Calu3 (cell line): ENCODE measurements at regions of chr3 and their contacts with region 1.

Region 1: DNA sequence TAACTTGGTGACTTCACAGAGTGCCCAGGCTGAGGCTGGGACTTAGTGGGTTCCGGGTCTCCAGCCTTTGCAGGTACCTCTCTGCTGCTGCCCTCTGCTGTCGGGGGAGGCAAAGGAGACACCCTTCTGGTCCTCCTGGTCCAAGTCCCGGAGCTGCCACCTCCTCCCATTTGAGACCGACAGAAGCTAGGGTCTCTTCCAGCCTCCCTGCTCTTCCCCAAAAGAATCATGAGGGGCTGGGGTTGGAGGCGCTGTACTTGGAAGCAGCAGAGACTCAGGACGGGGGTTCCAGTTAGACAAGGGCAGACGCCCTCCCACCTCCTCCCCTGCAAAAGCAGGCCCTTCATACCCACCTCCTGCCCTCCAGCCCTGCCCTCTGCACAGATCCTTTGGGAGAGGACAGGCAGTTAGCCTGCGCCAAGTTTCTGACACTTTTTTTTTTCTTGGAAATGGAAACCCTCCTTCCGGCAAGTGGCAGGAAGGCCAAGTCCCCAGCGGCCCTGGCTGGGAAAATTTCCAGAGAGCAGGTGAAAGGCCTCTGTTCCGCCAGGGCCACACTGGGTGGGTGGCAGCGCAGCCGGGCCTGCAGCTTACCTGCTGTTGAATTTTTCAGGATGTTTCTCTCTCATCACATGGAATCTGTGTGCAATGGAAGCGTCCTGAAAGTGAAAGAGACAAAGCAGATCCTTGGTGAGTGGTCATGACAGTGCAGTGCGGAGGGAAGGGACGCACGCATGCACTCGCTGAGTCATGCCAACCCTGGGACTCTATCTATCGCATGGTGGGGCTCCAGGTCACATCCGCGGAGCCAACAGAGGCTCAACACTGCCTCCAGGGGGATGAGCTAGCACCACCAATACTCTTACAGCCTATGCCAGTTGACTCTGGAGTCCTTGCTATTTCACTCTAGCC is 119.9 kb downstream of the DGKG start:
- DNase-seq: peak; percentile 94
- H3K4me3 Mint-ChIP-seq: peak overlapping the region; percentile 70
- H3K27ac Mint-ChIP-seq: peak overlapping the region; percentile 57
- H3K4me1 Mint-ChIP-seq: peaks cover 14% of the 10 kb centered on the region
- H3K27me3 Mint-ChIP-seq: peaks cover 15% of the 10 kb centered on the region
- CTCF ChIP-seq: peak; percentile 87

Region 2: DNA sequence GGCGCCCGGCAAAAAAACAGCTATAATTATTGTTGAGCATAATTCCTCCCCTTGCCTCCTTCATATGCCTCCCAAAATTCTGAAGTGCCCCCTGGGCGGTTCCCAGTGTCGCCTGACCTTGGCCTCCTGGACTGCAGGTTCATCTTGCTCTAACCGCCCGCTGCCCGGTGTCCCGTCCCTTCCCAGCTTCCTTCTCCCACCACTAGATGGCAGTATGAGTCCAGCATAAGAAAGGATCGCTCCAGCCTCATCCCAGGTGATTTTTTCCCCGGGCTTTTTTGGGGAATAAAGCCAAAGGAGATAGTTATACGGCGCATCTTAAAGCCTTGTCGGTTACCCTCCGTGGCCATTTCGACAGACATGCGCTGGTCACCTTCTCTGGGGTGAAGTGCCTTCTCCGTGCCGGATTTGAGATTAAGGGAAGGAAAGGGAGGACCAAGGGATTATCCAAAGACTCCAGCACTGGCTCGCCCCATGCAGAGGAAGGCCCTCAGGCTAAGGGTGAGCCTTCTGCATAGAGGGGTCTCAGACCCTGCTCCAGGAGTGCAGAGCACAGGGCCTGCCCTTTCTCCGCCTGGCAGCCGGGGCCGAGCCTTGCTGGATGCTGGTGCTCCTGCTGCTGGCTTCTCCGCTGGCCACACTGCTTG is 258.5 kb before region 1 on chr3:
- CTCF ChIA-PET with region 1: interaction called, 26 read pairs
- intact Hi-C with region 1: loop called (anchors 1 kb)
- DNase-seq: peak; percentile 87
- H3K4me3 Mint-ChIP-seq: no peak overlapping the region
- H3K27ac Mint-ChIP-seq: no peak overlapping the region
- H3K4me1 Mint-ChIP-seq: peaks cover 17% of the 10 kb centered on the region
- H3K27me3 Mint-ChIP-seq: peaks cover 16% of the 10 kb centered on the region
- CTCF ChIP-seq: peak; percentile 98

Region 3: DNA sequence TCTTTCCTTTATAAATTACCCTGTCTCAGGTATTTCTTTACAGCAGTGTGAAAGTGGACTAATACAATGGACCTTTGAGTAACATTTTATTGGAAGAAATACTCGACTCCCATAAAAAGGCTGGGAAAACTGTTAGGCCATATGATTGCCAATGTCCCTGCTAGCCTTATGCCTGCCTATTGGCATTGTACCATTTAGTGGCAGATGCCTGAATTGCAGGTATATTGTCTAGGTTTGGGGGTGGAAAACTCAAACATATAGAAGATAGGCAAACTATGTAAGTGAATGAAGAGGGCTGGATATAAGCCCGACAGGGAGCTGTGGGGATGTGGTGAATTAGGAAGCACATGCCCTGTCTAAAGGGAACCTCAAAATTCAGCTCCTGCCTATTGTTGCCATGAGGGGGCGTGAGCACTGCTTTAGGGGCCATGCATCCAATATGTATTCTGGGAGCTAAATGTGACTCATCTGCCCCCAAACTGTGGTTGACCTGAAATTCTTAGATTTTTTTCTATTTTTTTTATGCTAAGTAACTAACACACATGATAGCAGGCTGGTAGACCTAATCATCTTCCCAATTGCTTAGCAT is 239.2 kb before region 1 on chr3:
- CTCF ChIA-PET with region 1: interaction called, 23 read pairs
- intact Hi-C with region 1: loop called (anchors 1 kb)
- DNase-seq: peak; percentile 30
- H3K4me3 Mint-ChIP-seq: no peak overlapping the region
- H3K27ac Mint-ChIP-seq: no peak overlapping the region
- H3K4me1 Mint-ChIP-seq: no peaks in the 10 kb centered on the region
- H3K27me3 Mint-ChIP-seq: peaks cover 10% of the 10 kb centered on the region
- CTCF ChIP-seq: peak; percentile 62

Region 4: GRCh38 chr3:186097663-186098451 is 144.3 kb before region 1 on chr3:
- CTCF ChIA-PET with region 1: interaction called, 36 read pairs
- intact Hi-C with region 1: loop called (anchors 1 kb)
- DNase-seq: peak; percentile 96
- H3K4me3 Mint-ChIP-seq: peak overlapping the region; percentile 75
- H3K27ac Mint-ChIP-seq: peak overlapping the region; percentile 81
- H3K4me1 Mint-ChIP-seq: peaks cover 71% of the 10 kb centered on the region
- H3K27me3 Mint-ChIP-seq: no peaks in the 10 kb centered on the region
- CTCF ChIP-seq: no peak

Region 5: GRCh38 chr3:186108941-186109865 is 133.0 kb before region 1 on chr3 and contains the start of gene ETV5:
- CTCF ChIA-PET with region 1: interaction called, 15 read pairs
- intact Hi-C with region 1: no loop called
- DNase-seq: peak; percentile 100
- H3K4me3 Mint-ChIP-seq: peak within 1 kb of the TSS; percentile 79
- H3K27ac Mint-ChIP-seq: peak within 1 kb of the TSS; percentile 85
- H3K4me1 Mint-ChIP-seq: peaks cover 25% of the 10 kb centered on the region
- H3K27me3 Mint-ChIP-seq: peaks cover 16% of the 10 kb centered on the region
- CTCF ChIP-seq: no peak
- total RNA-seq, gene ETV5: 95.9 and 108 TPM in 2 replicates

Region 6: GRCh38 chr3:186277268-186277909 is 35.2 kb after region 1 on chr3:
- CTCF ChIA-PET with region 1: interaction called, 10 read pairs
- intact Hi-C with region 1: no loop called
- DNase-seq: peak; percentile 41
- H3K4me3 Mint-ChIP-seq: no peak overlapping the region
- H3K27ac Mint-ChIP-seq: no peak overlapping the region
- H3K4me1 Mint-ChIP-seq: no peaks in the 10 kb centered on the region
- H3K27me3 Mint-ChIP-seq: peaks cover 62% of the 10 kb centered on the region
- CTCF ChIP-seq: no peak

Region 7: DNA sequence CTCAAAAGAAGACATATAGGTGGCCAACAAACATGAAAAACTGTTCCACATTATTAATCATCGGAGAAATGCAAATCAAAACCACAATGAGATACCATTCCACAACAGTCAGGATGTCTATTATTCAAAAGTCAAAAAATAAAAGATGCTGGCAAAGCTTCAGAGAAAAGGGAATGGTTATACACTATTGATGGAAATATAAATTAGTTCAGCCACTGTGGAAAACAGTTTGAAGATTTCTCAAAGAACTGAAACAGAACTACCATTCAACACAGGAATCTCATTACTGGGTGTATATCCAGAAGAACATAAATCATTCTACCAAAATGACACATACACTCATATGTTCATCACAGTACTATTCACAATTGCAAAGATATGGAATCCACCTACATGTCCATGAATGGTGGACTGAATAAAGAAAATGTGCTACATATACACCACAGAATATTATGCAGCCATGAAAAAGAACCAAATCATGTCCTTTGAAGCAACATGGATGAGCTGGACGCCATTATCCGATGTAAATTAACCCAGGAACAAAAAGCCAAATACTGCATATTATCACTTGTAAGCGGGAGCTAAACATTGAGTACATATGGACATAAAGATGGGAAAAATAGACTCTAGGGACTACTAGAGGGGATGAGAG is 152.5 kb after region 1 on chr3:
- CTCF ChIA-PET with region 1: no interaction called
- intact Hi-C with region 1: no loop called
- DNase-seq: no peak
- H3K4me3 Mint-ChIP-seq: no peak overlapping the region
- H3K27ac Mint-ChIP-seq: no peak overlapping the region
- H3K4me1 Mint-ChIP-seq: no peaks in the 10 kb centered on the region
- H3K27me3 Mint-ChIP-seq: peaks cover 96% of the 10 kb centered on the region
- CTCF ChIP-seq: no peak

Region 8: DNA sequence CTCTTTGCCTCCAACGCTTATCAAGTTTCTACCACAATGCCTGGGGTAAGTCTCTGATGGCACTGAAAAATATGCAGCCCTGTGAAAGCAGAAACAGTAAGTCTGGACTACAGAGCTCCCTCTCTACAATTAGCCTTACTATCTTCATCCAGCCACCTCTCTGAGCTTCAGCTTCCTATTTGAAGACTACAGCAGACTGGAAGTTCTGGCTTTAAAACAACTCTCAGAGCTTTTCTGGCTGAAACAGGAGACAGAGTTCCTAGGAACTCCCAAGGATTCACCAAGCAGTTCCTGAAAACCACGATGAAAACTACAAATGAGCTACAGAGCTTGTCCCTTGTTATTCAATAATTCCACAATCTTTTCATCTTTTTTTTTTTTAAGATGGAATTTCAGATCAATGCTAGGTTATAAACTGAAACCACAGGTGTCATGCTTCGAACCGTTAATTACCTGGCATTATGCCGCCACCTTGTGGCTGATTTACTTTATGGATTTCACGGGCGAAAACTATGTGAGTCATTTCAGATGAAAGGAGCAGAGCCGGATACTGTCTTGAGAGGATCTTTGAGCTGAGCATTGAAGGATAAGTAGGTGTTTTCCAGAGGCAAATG is 298.2 kb after region 1 on chr3:
- CTCF ChIA-PET with region 1: interaction called, 16 read pairs
- intact Hi-C with region 1: no loop called
- DNase-seq: peak; percentile 89
- H3K4me3 Mint-ChIP-seq: no peak overlapping the region
- H3K27ac Mint-ChIP-seq: no peak overlapping the region
- H3K4me1 Mint-ChIP-seq: peaks cover 12% of the 10 kb centered on the region
- H3K27me3 Mint-ChIP-seq: no peaks in the 10 kb centered on the region
- CTCF ChIP-seq: peak; percentile 87